ENCODE measurements at regions of chr7 and their contacts with region 1.

Region 1: GRCh38 chr7:74190274-74190673 is 16.1 kb downstream of the EIF4H start:
- DNase-seq: no peak
- ATAC-seq: no peak
- H3K4me3 Mint-ChIP-seq: no peak overlapping the region
- H3K27ac Mint-ChIP-seq: no peak overlapping the region
- H3K4me1 Mint-ChIP-seq: peaks cover 25% of the 10 kb centered on the region
- H3K27me3 Mint-ChIP-seq: no peaks in the 10 kb centered on the region
- CTCF ChIP-seq: no peak

Region 2: DNA sequence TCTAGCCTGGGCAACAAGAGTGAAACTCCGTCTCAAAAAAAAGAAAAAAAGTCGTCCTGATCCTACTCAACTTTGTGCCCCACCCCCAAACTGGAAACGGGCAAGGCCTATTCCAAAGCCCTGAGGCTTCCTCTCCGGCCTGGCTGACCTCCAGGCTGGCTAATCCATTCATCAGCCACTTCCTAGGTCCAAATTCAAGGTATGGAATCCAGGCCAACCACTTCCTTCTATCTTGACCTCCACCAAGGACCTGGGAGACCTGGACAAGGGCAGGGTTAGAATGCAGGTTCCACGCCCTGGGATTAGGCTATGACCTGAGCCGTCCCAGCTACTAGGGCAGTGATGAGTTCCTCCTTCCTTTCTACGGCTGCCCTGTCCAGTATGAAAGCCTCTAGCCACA is 36.5 kb before region 1 on chr7:
- CTCF ChIA-PET with region 1: no interaction called
- POLR2A ChIA-PET with region 1: no interaction called
- intact Hi-C with region 1: no loop called
- DNase-seq: no peak
- ATAC-seq: no peak
- H3K4me3 Mint-ChIP-seq: no peak overlapping the region
- H3K27ac Mint-ChIP-seq: no peak overlapping the region
- H3K4me1 Mint-ChIP-seq: peaks cover 4% of the 10 kb centered on the region
- H3K27me3 Mint-ChIP-seq: peaks cover 2% of the 10 kb centered on the region
- CTCF ChIP-seq: no peak

Region 3: GRCh38 chr7:74164985-74165456 is 25.3 kb before region 1 on chr7:
- CTCF ChIA-PET with region 1: no interaction called
- POLR2A ChIA-PET with region 1: no interaction called
- intact Hi-C with region 1: no loop called
- DNase-seq: no peak
- ATAC-seq: no peak
- H3K4me3 Mint-ChIP-seq: no peak overlapping the region
- H3K27ac Mint-ChIP-seq: no peak overlapping the region
- H3K4me1 Mint-ChIP-seq: no peaks in the 10 kb centered on the region
- H3K27me3 Mint-ChIP-seq: no peaks in the 10 kb centered on the region
- CTCF ChIP-seq: no peak

Region 4: GRCh38 chr7:74324531-74325209 is 134.4 kb after region 1 on chr7:
- CTCF ChIA-PET with region 1: no interaction called
- POLR2A ChIA-PET with region 1: no interaction called
- intact Hi-C with region 1: no loop called
- DNase-seq: no peak
- ATAC-seq: no peak
- H3K4me3 Mint-ChIP-seq: no peak overlapping the region
- H3K27ac Mint-ChIP-seq: no peak overlapping the region
- H3K4me1 Mint-ChIP-seq: peaks cover 9% of the 10 kb centered on the region
- H3K27me3 Mint-ChIP-seq: no peaks in the 10 kb centered on the region
- CTCF ChIP-seq: no peak

Region 5: GRCh38 chr7:74388880-74389415 is 198.7 kb after region 1 on chr7:
- CTCF ChIA-PET with region 1: no interaction called
- POLR2A ChIA-PET with region 1: interaction called, 14 read pairs
- intact Hi-C with region 1: no loop called
- DNase-seq: no peak
- ATAC-seq: no peak
- H3K4me3 Mint-ChIP-seq: no peak overlapping the region
- H3K27ac Mint-ChIP-seq: no peak overlapping the region
- H3K4me1 Mint-ChIP-seq: no peaks in the 10 kb centered on the region
- H3K27me3 Mint-ChIP-seq: no peaks in the 10 kb centered on the region
- CTCF ChIP-seq: no peak

Measured in activated B cell treated with CpG ODN at 0.5 μM for 24 hours (primary cell).